ENCODE measurements at regions of chr11 and their contacts with region 1.

Region 1: GRCh38 chr11:81787584-81788049 is 946.0 kb downstream of the FAM181B start:
- DNase-seq: peak; percentile 19 to 35 (median 33)
- H3K4me3 ChIP-seq: no peak overlapping the region
- H3K4me3 Mint-ChIP-seq: no peak overlapping the region
- H3K27ac ChIP-seq: no peak overlapping the region
- H3K27ac Mint-ChIP-seq: no peak overlapping the region
- H3K4me1 ChIP-seq: peaks cover 4% of the 10 kb centered on the region
- H3K4me1 Mint-ChIP-seq: peaks cover 4 to 13% (median 7%) of the 10 kb centered on the region in 4 donors
- H3K27me3 ChIP-seq: no peaks in the 10 kb centered on the region
- H3K27me3 Mint-ChIP-seq: peaks cover 0 to 1% of the 10 kb centered on the region in 2 donors

Region 2: GRCh38 chr11:81707881-81708280 is 79.7 kb before region 1 on chr11:
- CTCF ChIA-PET with region 1: no interaction called
- POLR2A ChIA-PET with region 1: no interaction called
- intact Hi-C with region 1: no loop called
- DNase-seq: no peak
- H3K4me3 ChIP-seq: no peak overlapping the region
- H3K4me3 Mint-ChIP-seq: no peak overlapping the region
- H3K27ac ChIP-seq: no peak overlapping the region
- H3K27ac Mint-ChIP-seq: no peak overlapping the region
- H3K4me1 ChIP-seq: no peaks in the 10 kb centered on the region
- H3K4me1 Mint-ChIP-seq: no peaks in the 10 kb centered on the region
- H3K27me3 ChIP-seq: no peaks in the 10 kb centered on the region
- H3K27me3 Mint-ChIP-seq: peaks cover 2% of the 10 kb centered on the region in 2 donors

Region 3: GRCh38 chr11:81744336-81745116 is 43.1 kb before region 1 on chr11:
- CTCF ChIA-PET with region 1: no interaction called
- POLR2A ChIA-PET with region 1: no interaction called
- intact Hi-C with region 1: no loop called
- DNase-seq: no peak
- H3K4me3 ChIP-seq: no peak overlapping the region
- H3K4me3 Mint-ChIP-seq: no peak overlapping the region
- H3K27ac ChIP-seq: no peak overlapping the region
- H3K27ac Mint-ChIP-seq: no peak overlapping the region
- H3K4me1 ChIP-seq: no peaks in the 10 kb centered on the region
- H3K4me1 Mint-ChIP-seq: peaks cover 0 to under 1% (median 0%) of the 10 kb centered on the region in 4 donors
- H3K27me3 ChIP-seq: no peaks in the 10 kb centered on the region
- H3K27me3 Mint-ChIP-seq: peaks cover 1 to 7% of the 10 kb centered on the region in 2 donors

Region 4: DNA sequence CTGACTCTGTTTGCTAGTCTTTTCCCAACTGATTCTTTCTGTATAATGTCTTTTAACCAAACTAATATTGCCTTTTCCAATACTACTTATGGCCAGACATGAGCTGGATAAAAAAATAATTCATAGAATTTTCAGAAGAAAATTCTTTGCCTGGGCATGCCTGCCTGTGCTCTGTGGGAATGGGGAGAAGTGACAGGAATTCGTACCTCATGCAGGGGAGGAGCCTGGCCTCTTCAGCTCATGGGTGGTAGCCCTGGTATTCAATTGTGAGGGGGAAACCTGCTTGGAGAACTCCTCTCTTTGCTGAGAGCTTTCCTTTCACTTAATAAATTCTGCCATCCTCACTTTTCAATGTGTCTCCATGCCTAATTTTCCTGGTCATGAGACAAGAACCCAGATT is 17.2 kb after region 1 on chr11:
- CTCF ChIA-PET with region 1: interaction called, 5 read pairs
- POLR2A ChIA-PET with region 1: no interaction called
- intact Hi-C with region 1: loop called (anchors 1 kb)
- DNase-seq: no peak
- H3K4me3 ChIP-seq: no peak overlapping the region
- H3K4me3 Mint-ChIP-seq: no peak overlapping the region
- H3K27ac ChIP-seq: no peak overlapping the region
- H3K27ac Mint-ChIP-seq: no peak overlapping the region
- H3K4me1 ChIP-seq: no peaks in the 10 kb centered on the region
- H3K4me1 Mint-ChIP-seq: no peaks in the 10 kb centered on the region
- H3K27me3 ChIP-seq: no peaks in the 10 kb centered on the region
- H3K27me3 Mint-ChIP-seq: no peaks in the 10 kb centered on the region

Region 5: DNA sequence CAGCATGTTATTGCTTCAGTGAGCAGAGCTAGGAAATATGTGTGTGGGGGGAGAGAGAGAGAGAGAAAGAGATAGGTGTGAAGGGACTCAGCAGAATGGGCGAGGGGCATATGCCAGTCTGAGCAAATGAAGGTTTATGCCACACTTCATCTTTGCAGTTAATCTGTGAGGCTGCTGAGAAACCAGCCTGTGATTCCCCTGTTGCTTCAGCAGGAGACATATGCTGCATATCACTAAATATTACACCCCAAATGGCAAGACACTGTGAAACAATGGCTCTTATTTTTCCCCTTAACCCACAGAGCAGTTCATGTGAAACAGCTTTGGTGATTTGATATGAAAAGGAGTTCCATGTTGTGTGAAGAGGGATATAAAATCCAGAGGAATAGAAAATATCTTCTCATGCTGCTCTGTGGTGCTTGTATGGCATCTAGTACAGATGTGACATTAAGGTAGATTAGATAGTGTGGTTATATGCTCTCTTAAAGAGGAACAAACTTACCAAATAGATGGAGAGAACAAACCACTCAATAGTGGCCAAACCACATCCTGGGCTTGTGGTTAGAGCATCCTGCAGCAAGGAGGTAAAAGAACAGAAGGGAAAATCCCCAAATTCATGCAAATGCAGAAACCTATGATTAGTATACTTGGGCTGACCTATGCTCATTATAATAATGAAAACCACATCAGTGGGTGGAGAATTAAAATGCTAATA is 81.9 kb after region 1 on chr11:
- CTCF ChIA-PET with region 1: no interaction called
- POLR2A ChIA-PET with region 1: no interaction called
- intact Hi-C with region 1: loop called (anchors 1 kb)
- DNase-seq: peak; percentile 89 to 96 (median 92)
- H3K4me3 ChIP-seq: peak overlapping the region; percentile 14 to 41
- H3K4me3 Mint-ChIP-seq: peak overlapping the region; percentile 76 to 97 (median 84)
- H3K27ac ChIP-seq: peak overlapping the region; percentile 35
- H3K27ac Mint-ChIP-seq: peak overlapping the region; percentile 76 to 99 (median 95)
- H3K4me1 ChIP-seq: peaks cover 42% of the 10 kb centered on the region
- H3K4me1 Mint-ChIP-seq: peaks cover 29 to 49% (median 37%) of the 10 kb centered on the region in 4 donors
- H3K27me3 ChIP-seq: no peaks in the 10 kb centered on the region
- H3K27me3 Mint-ChIP-seq: no peaks in the 10 kb centered on the region

Region 6: DNA sequence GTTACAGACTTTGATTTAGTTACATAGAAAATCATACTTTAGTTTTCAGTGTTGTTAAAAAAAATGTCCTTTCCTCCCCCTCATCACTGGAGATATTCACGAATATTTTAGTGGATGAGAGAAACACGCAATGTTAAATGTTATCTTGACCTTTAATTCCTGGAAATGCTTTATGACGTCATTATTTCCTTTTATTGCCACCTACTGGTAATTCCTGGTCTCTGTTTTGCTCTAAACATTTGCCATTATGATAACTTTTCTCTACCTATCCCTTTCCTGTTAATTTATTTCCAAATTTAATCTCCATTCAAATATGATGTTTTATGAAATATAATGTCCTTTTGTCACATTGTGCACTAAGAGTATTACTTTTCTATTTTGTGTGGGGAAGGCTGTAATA is 175.4 kb after region 1 on chr11:
- CTCF ChIA-PET with region 1: interaction called, 10 read pairs
- POLR2A ChIA-PET with region 1: no interaction called
- intact Hi-C with region 1: loop called (anchors 1 kb)
- DNase-seq: peak in 1 of 5 donors; percentile 2
- H3K4me3 ChIP-seq: no peak overlapping the region
- H3K4me3 Mint-ChIP-seq: peak overlapping the region in 4 of 8 donors; percentile 7 to 45 (median 30)
- H3K27ac ChIP-seq: no peak overlapping the region
- H3K27ac Mint-ChIP-seq: peak overlapping the region in 1 of 7 donors; percentile 42
- H3K4me1 ChIP-seq: peaks cover 8% of the 10 kb centered on the region
- H3K4me1 Mint-ChIP-seq: peaks cover 5 to 19% (median 12%) of the 10 kb centered on the region in 4 donors
- H3K27me3 ChIP-seq: no peaks in the 10 kb centered on the region
- H3K27me3 Mint-ChIP-seq: no peaks in the 10 kb centered on the region

Region 7: DNA sequence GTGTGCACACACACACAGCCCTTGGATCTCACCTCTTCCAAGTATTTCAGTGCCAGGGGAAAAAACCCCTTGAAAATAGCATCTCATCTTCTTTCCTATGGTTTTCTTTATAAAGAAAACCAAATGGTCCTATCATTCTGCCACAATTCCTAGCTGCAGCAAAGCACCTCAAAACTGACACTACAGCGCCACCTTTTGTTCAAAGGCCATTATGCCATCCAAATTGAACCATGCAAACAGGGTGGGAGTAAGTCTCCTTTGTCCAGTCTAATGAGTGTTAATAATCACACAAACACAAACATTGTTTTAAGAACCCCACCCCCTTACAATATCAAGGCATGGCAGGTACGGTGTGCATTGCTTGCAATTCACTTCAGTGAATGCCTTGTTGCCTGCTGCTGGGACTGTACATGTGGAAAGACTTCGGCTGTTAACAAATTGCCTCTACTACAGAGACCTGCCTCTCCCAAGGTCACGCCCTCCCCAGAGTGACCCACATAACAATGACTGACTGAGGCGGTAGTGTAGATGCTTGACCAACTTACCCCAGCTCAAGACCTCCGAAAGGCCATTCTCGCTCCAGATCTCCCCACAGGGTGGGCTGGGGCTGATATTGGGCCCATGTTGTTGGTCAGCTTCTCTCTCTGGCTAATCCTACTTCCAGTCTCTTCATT is 914.4 kb after region 1 on chr11:
- CTCF ChIA-PET with region 1: no interaction called
- POLR2A ChIA-PET with region 1: no interaction called
- intact Hi-C with region 1: loop called (anchors 5 kb)
- DNase-seq: no peak
- H3K4me3 ChIP-seq: no peak overlapping the region
- H3K4me3 Mint-ChIP-seq: no peak overlapping the region
- H3K27ac ChIP-seq: no peak overlapping the region
- H3K27ac Mint-ChIP-seq: no peak overlapping the region
- H3K4me1 ChIP-seq: no peaks in the 10 kb centered on the region
- H3K4me1 Mint-ChIP-seq: no peaks in the 10 kb centered on the region
- H3K27me3 ChIP-seq: no peaks in the 10 kb centered on the region
- H3K27me3 Mint-ChIP-seq: peaks cover 4 to 9% of the 10 kb centered on the region in 2 donors